ENCODE measurements at regions of chrX and their contacts with region 1.

Region 1: DNA sequence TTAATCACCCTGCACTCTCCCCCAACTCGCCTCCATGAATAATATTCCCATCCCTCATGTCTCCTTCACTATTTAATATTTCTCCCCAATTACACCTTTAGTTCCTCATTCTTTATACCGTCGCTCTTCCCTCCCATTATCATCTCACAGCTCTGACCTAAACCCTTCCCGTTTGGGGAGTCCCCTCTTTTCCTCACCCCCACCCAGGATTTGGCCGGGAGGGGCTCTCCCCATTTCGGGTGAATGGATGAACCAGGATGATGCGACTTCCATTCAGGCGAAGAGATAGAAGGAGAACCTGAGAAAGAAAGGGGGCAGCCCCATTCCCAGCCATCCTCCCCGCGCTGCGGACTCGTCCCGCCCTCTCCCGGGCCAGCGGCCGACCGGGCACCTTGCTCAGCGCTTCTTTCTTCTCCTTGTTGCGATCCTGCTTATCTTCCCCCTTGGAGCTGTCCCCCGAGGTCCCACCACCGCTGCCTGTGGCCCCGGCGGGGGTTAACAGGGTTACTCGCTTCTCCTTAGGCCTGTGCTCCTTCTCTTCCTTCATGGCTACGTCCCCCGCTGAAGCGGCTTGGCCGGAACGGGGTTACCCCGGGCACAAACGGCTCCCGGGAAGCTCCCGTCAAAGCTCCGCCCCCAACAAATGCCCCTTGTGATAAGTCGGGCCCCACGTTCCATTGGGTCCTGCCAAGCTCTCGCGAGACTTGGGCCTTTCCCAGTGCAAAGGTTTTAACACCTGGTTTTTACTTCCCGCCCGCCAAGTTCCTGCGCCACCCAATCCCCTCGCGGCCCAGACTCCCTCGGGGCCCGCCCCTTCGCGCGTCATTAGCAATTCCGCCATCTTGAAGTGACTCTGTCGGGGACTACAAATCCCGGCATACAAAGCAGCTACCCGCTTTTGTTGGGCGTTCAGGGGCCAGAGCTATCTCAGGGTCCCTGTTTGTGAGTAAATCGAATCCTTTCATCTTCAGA is at the start of gene UPF3B:
- DNase-seq: peak; percentile 67 to 96 (median 92)
- ATAC-seq: peak; percentile 98
- H3K4me3 ChIP-seq: peak within 1 kb of the TSS; percentile 88
- H3K4me3 Mint-ChIP-seq: peak within 1 kb of the TSS; percentile 89 to 100 (median 98)
- H3K27ac ChIP-seq: peak within 1 kb of the TSS; percentile 95
- H3K27ac Mint-ChIP-seq: peak within 1 kb of the TSS; percentile 87 to 99 (median 97)
- H3K4me1 ChIP-seq: no peaks in the 10 kb centered on the region
- H3K4me1 Mint-ChIP-seq: peaks cover 3 to 29% (median 23%) of the 10 kb centered on the region in 7 donors
- H3K27me3 ChIP-seq: no peaks in the 10 kb centered on the region
- H3K27me3 Mint-ChIP-seq: peaks cover 0 to 3% (median 0%) of the 10 kb centered on the region in 5 donors
- total RNA-seq, gene UPF3B: 7.6 to 12.6 (median 11.3) TPM

Region 2: DNA sequence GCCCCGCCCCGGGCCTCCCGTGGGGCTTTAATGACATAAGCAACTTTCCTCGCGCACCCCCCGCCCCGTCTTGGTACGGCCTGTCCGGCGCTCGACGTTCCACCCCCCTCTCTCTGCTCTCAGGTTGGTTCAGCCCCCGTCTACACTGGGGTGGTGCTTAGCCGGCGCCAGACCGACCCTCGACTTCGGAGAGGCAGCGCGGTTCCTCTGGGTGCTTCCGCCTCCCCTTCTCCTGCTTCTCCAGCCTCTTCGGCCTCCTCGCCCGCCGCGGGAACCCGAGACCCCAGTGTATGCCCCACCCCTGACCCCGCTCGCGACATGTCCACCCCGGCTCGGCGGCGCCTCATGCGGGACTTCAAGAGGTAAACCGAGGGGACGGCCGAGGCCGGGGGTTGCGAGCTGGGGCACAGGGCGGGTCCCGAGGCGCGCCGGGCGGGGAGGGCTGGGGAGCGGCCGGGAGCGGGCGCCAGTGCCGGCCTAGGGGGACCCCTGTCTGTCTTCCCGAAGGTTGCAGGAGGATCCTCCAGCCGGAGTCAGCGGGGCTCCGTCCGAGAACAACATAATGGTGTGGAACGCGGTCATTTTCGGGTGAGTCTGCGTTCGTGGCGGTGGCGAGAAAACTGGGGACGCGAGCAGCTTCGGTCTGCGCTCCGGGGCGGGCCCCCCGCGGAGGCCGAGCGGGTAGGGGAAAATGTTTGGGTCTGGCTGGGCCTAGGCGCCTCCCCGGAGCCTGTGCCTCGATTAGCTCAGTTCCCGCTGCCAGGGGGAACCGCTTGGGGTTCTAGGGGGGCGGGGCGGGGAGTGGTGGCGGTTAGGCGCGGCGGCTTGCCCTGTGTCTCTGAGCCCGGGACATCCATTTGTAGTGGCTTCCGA is 278.0 kb before region 1 on chrX and contains the start of gene UBE2A:
- CTCF ChIA-PET with region 1: no interaction called
- POLR2A ChIA-PET with region 1: no interaction called
- intact Hi-C with region 1: loop called in 1 of 2 experiments (anchors 1 kb)
- DNase-seq: peak; percentile 72 to 89 (median 85)
- ATAC-seq: peak; percentile 99
- H3K4me3 ChIP-seq: peak within 1 kb of the TSS; percentile 72
- H3K4me3 Mint-ChIP-seq: peak within 1 kb of the TSS; percentile 85 to 96 (median 92)
- H3K27ac ChIP-seq: peak within 1 kb of the TSS; percentile 88
- H3K27ac Mint-ChIP-seq: peak within 1 kb of the TSS; percentile 85 to 97 (median 90)
- H3K4me1 ChIP-seq: peaks cover 0 to 11% of the 10 kb centered on the region in 2 donors
- H3K4me1 Mint-ChIP-seq: peaks cover 7 to 35% (median 18%) of the 10 kb centered on the region in 7 donors
- H3K27me3 ChIP-seq: no peaks in the 10 kb centered on the region
- H3K27me3 Mint-ChIP-seq: no peaks in the 10 kb centered on the region
- total RNA-seq, gene UBE2A: 34.0 to 74.7 (median 60.2) TPM

Region 3: DNA sequence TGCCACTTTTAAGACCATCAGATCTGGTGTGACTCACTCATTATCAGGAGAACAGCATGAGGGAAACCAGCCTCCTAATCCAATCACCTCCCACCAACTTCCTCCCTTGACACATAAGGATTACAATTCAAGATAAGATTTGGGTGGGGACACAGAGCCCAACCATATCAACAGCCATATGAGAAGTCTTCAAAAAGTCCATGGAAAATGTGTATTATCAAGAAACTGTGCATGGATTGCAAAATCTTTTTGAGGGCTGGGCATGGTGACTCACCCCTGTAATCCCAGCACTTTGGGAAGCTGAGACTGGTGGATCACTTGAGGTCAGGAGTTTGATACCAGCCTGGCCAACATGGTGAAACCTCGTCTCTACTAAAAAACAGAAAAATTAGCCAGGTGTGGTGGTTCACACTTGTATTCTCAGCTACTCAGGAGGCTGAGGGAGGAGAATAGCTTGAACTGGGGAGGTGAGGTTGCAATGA is 43.4 kb before region 1 on chrX:
- CTCF ChIA-PET with region 1: no interaction called
- POLR2A ChIA-PET with region 1: no interaction called
- intact Hi-C with region 1: no loop called
- DNase-seq: no peak
- ATAC-seq: no peak
- H3K4me3 ChIP-seq: no peak overlapping the region
- H3K4me3 Mint-ChIP-seq: no peak overlapping the region
- H3K27ac ChIP-seq: no peak overlapping the region
- H3K27ac Mint-ChIP-seq: no peak overlapping the region
- H3K4me1 ChIP-seq: no peaks in the 10 kb centered on the region
- H3K4me1 Mint-ChIP-seq: peaks cover 0 to 3% (median 0%) of the 10 kb centered on the region in 7 donors
- H3K27me3 ChIP-seq: no peaks in the 10 kb centered on the region
- H3K27me3 Mint-ChIP-seq: no peaks in the 10 kb centered on the region

Region 4: GRCh38 chrX:119826399-119826959 is 26.2 kb before region 1 on chrX:
- CTCF ChIA-PET with region 1: no interaction called
- POLR2A ChIA-PET with region 1: interaction called, 10 read pairs
- intact Hi-C with region 1: loop called in 1 of 2 experiments (anchors 1 kb)
- DNase-seq: no peak
- ATAC-seq: no peak
- H3K4me3 ChIP-seq: no peak overlapping the region
- H3K4me3 Mint-ChIP-seq: no peak overlapping the region
- H3K27ac ChIP-seq: no peak overlapping the region
- H3K27ac Mint-ChIP-seq: peak overlapping the region in 5 of 9 donors; percentile 12 to 73 (median 56)
- H3K4me1 ChIP-seq: no peaks in the 10 kb centered on the region
- H3K4me1 Mint-ChIP-seq: peaks cover 0 to 23% (median 16%) of the 10 kb centered on the region in 7 donors
- H3K27me3 ChIP-seq: no peaks in the 10 kb centered on the region
- H3K27me3 Mint-ChIP-seq: no peaks in the 10 kb centered on the region

Region 5: GRCh38 chrX:119887721-119888425 is 35.2 kb after region 1 on chrX:
- CTCF ChIA-PET with region 1: no interaction called
- POLR2A ChIA-PET with region 1: interaction called, 3 read pairs
- intact Hi-C with region 1: loop called (anchors 5 kb)
- DNase-seq: peak; percentile 30 to 61 (median 38)
- ATAC-seq: peak; percentile 87
- H3K4me3 ChIP-seq: no peak overlapping the region
- H3K4me3 Mint-ChIP-seq: peak overlapping the region in 9 of 10 donors; percentile 38 to 67 (median 51)
- H3K27ac ChIP-seq: no peak overlapping the region
- H3K27ac Mint-ChIP-seq: no peak overlapping the region
- H3K4me1 ChIP-seq: no peaks in the 10 kb centered on the region
- H3K4me1 Mint-ChIP-seq: peaks cover 0 to 11% (median 7%) of the 10 kb centered on the region in 7 donors
- H3K27me3 ChIP-seq: no peaks in the 10 kb centered on the region
- H3K27me3 Mint-ChIP-seq: no peaks in the 10 kb centered on the region

Region 6: DNA sequence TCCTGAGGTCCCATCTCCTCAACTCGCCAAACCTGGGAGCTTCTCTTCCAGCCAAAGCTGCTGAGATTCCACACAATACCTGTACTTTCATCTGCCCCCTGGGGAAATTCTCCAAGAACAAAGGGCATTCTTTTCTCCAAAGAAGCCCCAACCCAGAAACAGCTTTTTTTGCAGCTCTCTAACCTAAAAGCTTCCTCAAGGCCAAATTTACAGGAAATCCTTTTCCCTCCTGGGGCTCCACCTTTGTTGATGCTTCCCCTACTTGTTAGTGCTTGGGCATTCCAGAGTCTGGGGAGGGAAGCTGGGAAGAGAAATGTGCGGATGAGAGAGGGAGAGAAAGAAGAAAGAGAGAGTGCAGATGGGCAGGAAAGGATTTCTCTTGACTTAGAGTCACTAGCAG is 422.3 kb after region 1 on chrX:
- CTCF ChIA-PET with region 1: no interaction called
- POLR2A ChIA-PET with region 1: no interaction called
- intact Hi-C with region 1: no loop called
- DNase-seq: no peak
- ATAC-seq: no peak
- H3K4me3 ChIP-seq: no peak overlapping the region
- H3K4me3 Mint-ChIP-seq: no peak overlapping the region
- H3K27ac ChIP-seq: no peak overlapping the region
- H3K27ac Mint-ChIP-seq: no peak overlapping the region
- H3K4me1 ChIP-seq: peaks cover 0 to 2% of the 10 kb centered on the region in 2 donors
- H3K4me1 Mint-ChIP-seq: peaks cover 0 to 4% (median 2%) of the 10 kb centered on the region in 7 donors
- H3K27me3 ChIP-seq: no peaks in the 10 kb centered on the region
- H3K27me3 Mint-ChIP-seq: peaks cover 0 to 19% (median 0%) of the 10 kb centered on the region in 5 donors

Region 7: GRCh38 chrX:121128925-121129877 is 1276.5 kb after region 1 on chrX:
- CTCF ChIA-PET with region 1: no interaction called
- POLR2A ChIA-PET with region 1: no interaction called
- intact Hi-C with region 1: no loop called
- DNase-seq: no peak
- ATAC-seq: no peak
- H3K4me3 ChIP-seq: no peak overlapping the region
- H3K4me3 Mint-ChIP-seq: no peak overlapping the region
- H3K27ac ChIP-seq: no peak overlapping the region
- H3K27ac Mint-ChIP-seq: no peak overlapping the region
- H3K4me1 ChIP-seq: no peaks in the 10 kb centered on the region
- H3K4me1 Mint-ChIP-seq: no peaks in the 10 kb centered on the region
- H3K27me3 ChIP-seq: no peaks in the 10 kb centered on the region
- H3K27me3 Mint-ChIP-seq: no peaks in the 10 kb centered on the region